ENCODE measurements at regions of chr15 and their contacts with region 1.

Region 1: GRCh38 chr15:41698779-41699178 is 38.6 kb downstream of the MGA start:
- DNase-seq: peak; percentile 75
- H3K4me3 ChIP-seq: no peak overlapping the region
- H3K27ac ChIP-seq: no peak overlapping the region
- H3K4me1 ChIP-seq: peaks cover 3% of the 10 kb centered on the region
- H3K27me3 ChIP-seq: no peaks in the 10 kb centered on the region
- CTCF ChIP-seq: no peak

Region 2: DNA sequence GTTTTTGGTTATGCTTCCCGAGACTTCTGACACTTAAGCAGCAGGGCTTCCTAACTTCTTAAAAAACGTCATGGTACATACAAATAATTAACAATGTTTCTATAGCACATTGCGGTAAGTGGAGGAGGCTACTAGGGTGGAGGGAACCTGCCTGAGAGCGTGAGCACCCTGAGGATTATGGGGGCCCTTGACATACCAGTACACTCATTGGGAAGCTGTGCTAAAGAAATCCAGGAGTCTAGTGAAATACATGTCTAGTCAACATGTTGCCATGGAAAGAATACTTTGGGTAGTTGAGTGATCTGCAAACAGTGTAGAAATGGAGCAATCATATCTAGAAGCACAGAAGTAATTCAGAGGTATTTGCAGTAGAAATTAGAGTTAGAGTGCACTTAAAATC is 36.3 kb after region 1 on chr15:
- CTCF ChIA-PET with region 1: no interaction called
- dilution Hi-C with region 1: loop called (anchors 5 kb)
- in situ Hi-C with region 1: no loop called
- intact Hi-C with region 1: no loop called
- DNase-seq: no peak
- H3K4me3 ChIP-seq: no peak overlapping the region
- H3K27ac ChIP-seq: no peak overlapping the region
- H3K4me1 ChIP-seq: no peaks in the 10 kb centered on the region
- H3K27me3 ChIP-seq: no peaks in the 10 kb centered on the region
- CTCF ChIP-seq: no peak